ENCODE measurements at regions of chr20 and their contacts with region 1.

Region 1: DNA sequence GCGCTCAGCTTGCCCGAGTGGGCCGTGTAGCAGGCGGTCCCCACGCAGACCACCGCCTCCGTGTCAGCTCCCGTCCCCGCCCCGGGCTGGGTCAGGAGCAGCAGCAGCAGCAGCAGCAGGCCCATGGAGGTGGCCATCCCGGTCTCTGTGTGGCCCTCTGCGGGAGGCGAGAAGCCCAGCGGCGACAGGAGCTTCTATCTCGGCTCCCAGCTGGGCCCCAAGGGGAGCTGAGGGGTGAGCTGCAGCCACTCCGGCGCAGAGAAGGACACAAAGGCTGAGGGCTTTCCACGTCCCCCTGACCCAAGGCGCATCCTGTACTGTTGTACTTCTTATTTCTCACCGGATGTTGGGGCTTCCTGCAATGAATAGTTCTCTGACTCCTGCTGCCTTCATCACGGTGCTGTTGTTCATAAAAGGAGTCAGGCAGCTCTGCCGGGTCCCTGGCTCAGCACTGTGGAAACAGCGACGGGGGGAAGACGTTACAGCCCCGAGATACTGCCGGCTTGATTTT is at the start of gene CD93:
- DNase-seq: peak; percentile 85 to 94 (median 86)
- H3K4me3 ChIP-seq: peak within 1 kb of the TSS; percentile 31 to 88 (median 64)
- H3K4me3 Mint-ChIP-seq: peak within 1 kb of the TSS; percentile 94 to 97
- H3K27ac ChIP-seq: peak within 1 kb of the TSS; percentile 96 to 97
- H3K27ac Mint-ChIP-seq: peak within 1 kb of the TSS; percentile 97 to 100 (median 98)
- H3K4me1 ChIP-seq: peaks cover 65 to 84% of the 10 kb centered on the region in 2 donors
- H3K4me1 Mint-ChIP-seq: peaks cover 64% of the 10 kb centered on the region
- H3K27me3 ChIP-seq: no peaks in the 10 kb centered on the region
- H3K27me3 Mint-ChIP-seq: peaks cover 0 to 7% (median 0%) of the 10 kb centered on the region in 3 donors
- CTCF ChIP-seq: no peak
- polyA plus RNA-seq, gene CD93: 26.0 to 170 (median 48.9) TPM

Region 2: GRCh38 chr20:23050847-23051631 is 35.1 kb before region 1 on chr20:
- intact Hi-C with region 1: loop called in 1 of 2 experiments (anchors 5 kb)
- DNase-seq: peak; percentile 72 to 86 (median 78)
- H3K4me3 ChIP-seq: peak overlapping the region; percentile 43 to 79 (median 50)
- H3K4me3 Mint-ChIP-seq: peak overlapping the region; percentile 88 to 93
- H3K27ac ChIP-seq: peak overlapping the region; percentile 45 to 91
- H3K27ac Mint-ChIP-seq: peak overlapping the region; percentile 88 to 97 (median 92)
- H3K4me1 ChIP-seq: peaks cover 43 to 57% of the 10 kb centered on the region in 2 donors
- H3K4me1 Mint-ChIP-seq: peaks cover 42% of the 10 kb centered on the region
- H3K27me3 ChIP-seq: peaks cover 0 to 11% of the 10 kb centered on the region in 2 donors
- H3K27me3 Mint-ChIP-seq: peaks cover 9 to 22% (median 20%) of the 10 kb centered on the region in 3 donors
- CTCF ChIP-seq: peak; percentile 97

Region 3: DNA sequence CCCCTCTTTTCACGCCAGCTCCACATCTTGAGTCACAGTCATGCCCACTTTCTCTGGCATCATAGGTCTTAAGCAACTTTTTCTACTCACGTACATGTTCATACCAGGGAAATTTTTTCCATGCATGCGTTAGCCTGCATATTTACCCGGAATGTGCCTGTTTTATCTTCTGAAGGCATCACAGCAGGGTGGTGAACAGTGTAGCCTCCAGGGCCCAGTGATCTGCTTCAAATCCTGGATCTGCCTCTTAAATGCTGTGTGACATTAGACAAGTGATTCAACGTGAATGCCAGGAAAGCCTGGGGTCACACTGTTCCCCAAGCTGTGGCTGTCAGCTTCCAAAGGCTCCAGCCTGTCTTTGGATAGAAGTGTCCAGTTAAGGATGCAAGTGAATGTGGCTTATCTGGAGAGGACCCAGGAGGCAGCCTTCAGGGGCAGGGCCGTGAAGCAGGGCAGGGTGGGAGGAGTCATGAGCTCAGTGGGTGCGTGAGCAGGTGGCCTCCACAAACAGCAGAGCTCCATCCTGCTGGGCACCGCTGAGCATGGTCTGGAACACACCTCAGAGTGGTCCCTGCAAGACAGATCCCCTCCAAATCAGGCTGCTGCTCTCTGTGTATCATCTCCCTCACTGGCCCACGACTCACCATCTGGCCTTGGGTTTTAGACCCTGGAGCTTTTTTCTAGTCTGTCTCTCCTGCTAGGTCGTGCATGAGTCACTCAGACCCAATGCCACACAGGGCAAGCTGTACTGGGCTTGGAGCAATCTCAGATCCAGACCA is 30.4 kb after region 1 on chr20:
- intact Hi-C with region 1: loop called in 1 of 2 experiments (anchors 5 kb)
- DNase-seq: peak; percentile 85 to 95 (median 86)
- H3K4me3 ChIP-seq: peak overlapping the region in 1 of 3 experiments; percentile 0
- H3K4me3 Mint-ChIP-seq: peak overlapping the region; percentile 38 to 44
- H3K27ac ChIP-seq: peak overlapping the region; percentile 96 to 100
- H3K27ac Mint-ChIP-seq: peak overlapping the region; percentile 96 to 100 (median 98)
- H3K4me1 ChIP-seq: peaks cover 87 to 91% of the 10 kb centered on the region in 2 donors
- H3K4me1 Mint-ChIP-seq: peaks cover 88% of the 10 kb centered on the region
- H3K27me3 ChIP-seq: no peaks in the 10 kb centered on the region
- H3K27me3 Mint-ChIP-seq: no peaks in the 10 kb centered on the region
- CTCF ChIP-seq: no peak

Region 4: GRCh38 chr20:23125625-23126191 is 39.6 kb after region 1 on chr20:
- intact Hi-C with region 1: loop called in 1 of 2 experiments (anchors 5 kb)
- DNase-seq: peak; percentile 96 to 99 (median 99)
- H3K4me3 ChIP-seq: peak overlapping the region in 1 of 3 experiments; percentile 37
- H3K4me3 Mint-ChIP-seq: peak overlapping the region; percentile 39 to 65
- H3K27ac ChIP-seq: peak overlapping the region; percentile 99 to 100
- H3K27ac Mint-ChIP-seq: peak overlapping the region; percentile 98 to 99 (median 99)
- H3K4me1 ChIP-seq: peaks cover 85 to 98% of the 10 kb centered on the region in 2 donors
- H3K4me1 Mint-ChIP-seq: peaks cover 89% of the 10 kb centered on the region
- H3K27me3 ChIP-seq: no peaks in the 10 kb centered on the region
- H3K27me3 Mint-ChIP-seq: no peaks in the 10 kb centered on the region
- CTCF ChIP-seq: no peak

Region 5: DNA sequence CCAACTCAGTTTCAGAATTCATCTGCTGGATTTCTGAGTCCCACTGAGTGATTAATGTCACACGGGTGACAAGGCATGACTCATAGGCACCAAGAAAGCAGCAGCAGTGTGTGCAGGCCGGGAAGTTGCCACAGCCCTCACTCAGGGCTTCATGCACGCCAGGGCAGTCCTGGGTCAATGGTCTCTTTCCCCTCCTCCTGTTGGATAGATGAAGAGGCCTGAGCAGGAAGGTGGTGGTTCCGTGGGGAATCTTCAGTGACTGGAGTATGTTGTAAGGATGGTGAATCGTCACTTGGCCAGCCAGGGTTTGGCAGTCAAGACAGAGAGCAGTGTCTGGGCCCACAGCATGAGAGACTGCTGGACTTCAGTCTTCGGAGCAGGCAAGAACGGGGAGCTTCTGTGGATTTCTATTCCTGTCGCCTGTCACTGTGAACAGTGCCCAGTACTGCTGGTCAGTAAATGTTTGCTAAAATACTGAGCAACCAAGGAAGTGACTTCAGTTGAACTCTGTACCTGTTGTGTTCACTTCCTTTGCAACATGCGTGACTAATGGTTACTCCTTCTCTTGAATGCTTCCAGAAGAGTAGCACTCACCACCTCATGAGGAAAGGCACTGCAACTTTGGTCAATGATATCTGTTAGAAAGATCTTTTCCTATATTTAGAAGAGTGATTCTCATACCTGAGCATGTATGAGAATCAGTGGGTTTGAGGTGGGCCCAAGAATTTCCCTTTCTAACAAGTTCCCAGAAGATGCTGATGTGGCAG is 62.0 kb after region 1 on chr20:
- intact Hi-C with region 1: loop called in 1 of 2 experiments (anchors 5 kb)
- DNase-seq: peak; percentile 98 to 99 (median 99)
- H3K4me3 ChIP-seq: no peak overlapping the region
- H3K4me3 Mint-ChIP-seq: peak overlapping the region; percentile 76 to 82
- H3K27ac ChIP-seq: peak overlapping the region; percentile 99 to 100
- H3K27ac Mint-ChIP-seq: peak overlapping the region; percentile 99 to 100 (median 100)
- H3K4me1 ChIP-seq: peaks cover 96 to 100% of the 10 kb centered on the region in 2 donors
- H3K4me1 Mint-ChIP-seq: peaks cover 98% of the 10 kb centered on the region
- H3K27me3 ChIP-seq: no peaks in the 10 kb centered on the region
- H3K27me3 Mint-ChIP-seq: peaks cover 0 to 3% (median 3%) of the 10 kb centered on the region in 3 donors
- CTCF ChIP-seq: no peak

Region 6: GRCh38 chr20:23235173-23236027 is 149.3 kb after region 1 on chr20:
- intact Hi-C with region 1: loop called in 1 of 2 experiments (anchors 10 kb)
- DNase-seq: peak; percentile 66 to 78 (median 73)
- H3K4me3 ChIP-seq: no peak overlapping the region
- H3K4me3 Mint-ChIP-seq: no peak overlapping the region
- H3K27ac ChIP-seq: peak overlapping the region in 1 of 2 donors; percentile 18
- H3K27ac Mint-ChIP-seq: peak overlapping the region in 3 of 7 donors; percentile 53 to 92 (median 86)
- H3K4me1 ChIP-seq: peaks cover 22 to 29% of the 10 kb centered on the region in 2 donors
- H3K4me1 Mint-ChIP-seq: peaks cover 33% of the 10 kb centered on the region
- H3K27me3 ChIP-seq: no peaks in the 10 kb centered on the region
- H3K27me3 Mint-ChIP-seq: peaks cover 2 to 9% (median 7%) of the 10 kb centered on the region in 3 donors
- CTCF ChIP-seq: peak; percentile 94

Region 7: DNA sequence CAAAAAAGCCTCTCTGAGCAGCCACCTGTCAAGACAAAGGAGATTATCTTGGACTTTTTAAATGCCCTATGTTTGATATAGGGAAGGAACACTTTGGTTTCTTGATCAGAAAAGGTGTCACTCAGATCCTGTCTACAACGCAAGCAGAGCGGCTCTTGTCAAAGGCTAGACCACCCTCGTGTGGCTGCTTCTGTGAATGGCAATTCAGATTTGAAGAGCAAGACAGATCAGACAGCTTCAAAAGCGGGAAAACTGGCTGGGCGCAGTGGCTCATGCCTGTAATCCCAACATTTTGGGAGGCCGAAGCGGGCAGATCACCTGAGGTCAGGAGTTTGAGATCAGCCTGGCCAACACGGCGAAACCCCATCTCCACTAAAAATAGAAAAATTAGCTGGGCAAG is 254.4 kb after region 1 on chr20:
- intact Hi-C with region 1: no loop called
- DNase-seq: peak; percentile 30 to 58 (median 42)
- H3K4me3 ChIP-seq: no peak overlapping the region
- H3K4me3 Mint-ChIP-seq: peak overlapping the region in 1 of 2 donors; percentile 26
- H3K27ac ChIP-seq: no peak overlapping the region
- H3K27ac Mint-ChIP-seq: no peak overlapping the region
- H3K4me1 ChIP-seq: no peaks in the 10 kb centered on the region
- H3K4me1 Mint-ChIP-seq: peaks cover 2% of the 10 kb centered on the region
- H3K27me3 ChIP-seq: no peaks in the 10 kb centered on the region
- H3K27me3 Mint-ChIP-seq: peaks cover 0 to 5% (median 0%) of the 10 kb centered on the region in 3 donors
- CTCF ChIP-seq: peak; percentile 80

Measured in CD14-positive monocyte (primary cell).